Caco-2 (cell line): ENCODE measurements at regions of chr19 and their contacts with region 1.

Region 1: GRCh38 chr19:47243776-47244547 is 12.4 kb upstream of the CCDC9 start:
- DNase-seq: peak; percentile 95 to 99
- H3K4me3 ChIP-seq: peak overlapping the region; percentile 51
- H3K4me3 Mint-ChIP-seq: no peak overlapping the region
- H3K27ac Mint-ChIP-seq: no peak overlapping the region
- H3K4me1 ChIP-seq: peaks cover 14% of the 10 kb centered on the region
- H3K4me1 Mint-ChIP-seq: no peaks in the 10 kb centered on the region
- H3K27me3 ChIP-seq: no peaks in the 10 kb centered on the region
- H3K27me3 Mint-ChIP-seq: no peaks in the 10 kb centered on the region
- CTCF ChIP-seq: peak; percentile 98

Region 2: GRCh38 chr19:47013041-47013517 is 230.9 kb before region 1 on chr19:
- CTCF ChIA-PET with region 1: interaction called, 19 read pairs
- POLR2A ChIA-PET with region 1: no interaction called
- intact Hi-C with region 1: loop called (anchors 5 kb)
- DNase-seq: peak; percentile 82 to 92
- H3K4me3 ChIP-seq: 0 out of 2 replicates have a peak overlapping the region, but pooled peaks have one; percentile 7
- H3K4me3 Mint-ChIP-seq: peak overlapping the region; percentile 9
- H3K27ac Mint-ChIP-seq: peak overlapping the region; percentile 10
- H3K4me1 ChIP-seq: no peaks in the 10 kb centered on the region
- H3K4me1 Mint-ChIP-seq: peaks cover 11% of the 10 kb centered on the region
- H3K27me3 ChIP-seq: no peaks in the 10 kb centered on the region
- H3K27me3 Mint-ChIP-seq: peaks cover 3% of the 10 kb centered on the region
- CTCF ChIP-seq: peak; percentile 99

Region 3: DNA sequence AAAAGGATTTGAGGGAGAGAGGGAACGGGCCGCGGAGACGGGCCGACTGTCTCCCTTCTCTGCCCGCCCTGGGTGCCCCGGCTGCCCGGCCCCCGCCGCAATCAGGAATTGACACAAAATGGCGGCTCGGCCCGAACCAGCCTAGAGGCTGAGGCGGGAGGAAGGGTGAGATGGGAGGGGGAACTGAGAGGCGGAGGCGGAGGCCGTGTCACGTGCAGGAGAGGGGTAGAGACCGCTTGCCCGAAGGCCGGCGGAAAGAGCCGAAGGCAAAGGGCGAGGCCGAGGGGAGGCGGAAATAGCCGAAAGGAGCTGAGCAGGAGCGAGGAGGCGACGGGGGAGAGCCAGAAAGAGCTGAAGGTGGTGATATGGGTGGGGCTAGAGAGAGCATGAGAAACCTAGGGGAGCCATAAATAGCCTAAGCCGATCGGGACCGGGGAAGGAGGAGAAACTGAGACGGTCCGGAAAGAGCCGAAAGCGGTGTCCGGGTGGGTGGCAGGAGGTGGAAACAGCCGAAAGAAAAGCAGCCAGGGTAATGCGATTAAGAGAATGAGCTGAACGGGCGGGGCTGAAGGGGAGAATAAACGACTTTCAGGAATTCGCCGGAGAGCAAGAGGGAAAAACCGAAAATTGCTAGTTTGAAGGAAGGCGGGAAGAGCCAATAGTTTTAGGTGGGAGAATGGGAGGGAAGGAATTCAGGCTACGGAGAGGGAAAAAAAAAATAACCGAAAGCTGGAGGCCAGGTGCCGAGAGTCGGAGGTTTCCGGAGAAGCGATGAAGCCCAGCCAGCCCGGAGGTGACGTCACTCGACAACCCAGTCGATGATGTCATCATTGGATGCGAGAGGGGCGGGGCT is 130.7 kb before region 1 on chr19 and contains the start of gene ZC3H4:
- CTCF ChIA-PET with region 1: interaction called, 10 read pairs
- POLR2A ChIA-PET with region 1: interaction called, 21 read pairs
- intact Hi-C with region 1: no loop called
- DNase-seq: peak; percentile 100
- H3K4me3 ChIP-seq: peak within 1 kb of the TSS; percentile 64
- H3K4me3 Mint-ChIP-seq: peak within 1 kb of the TSS; percentile 97
- H3K27ac Mint-ChIP-seq: peak within 1 kb of the TSS; percentile 99
- H3K4me1 ChIP-seq: peaks cover 20% of the 10 kb centered on the region
- H3K4me1 Mint-ChIP-seq: peaks cover 28% of the 10 kb centered on the region
- H3K27me3 ChIP-seq: no peaks in the 10 kb centered on the region
- H3K27me3 Mint-ChIP-seq: no peaks in the 10 kb centered on the region
- CTCF ChIP-seq: peak in 1 of 2 experiments; percentile 11
- total RNA-seq, gene ZC3H4: 70.3 and 77.7 TPM in 2 replicates

Region 4: DNA sequence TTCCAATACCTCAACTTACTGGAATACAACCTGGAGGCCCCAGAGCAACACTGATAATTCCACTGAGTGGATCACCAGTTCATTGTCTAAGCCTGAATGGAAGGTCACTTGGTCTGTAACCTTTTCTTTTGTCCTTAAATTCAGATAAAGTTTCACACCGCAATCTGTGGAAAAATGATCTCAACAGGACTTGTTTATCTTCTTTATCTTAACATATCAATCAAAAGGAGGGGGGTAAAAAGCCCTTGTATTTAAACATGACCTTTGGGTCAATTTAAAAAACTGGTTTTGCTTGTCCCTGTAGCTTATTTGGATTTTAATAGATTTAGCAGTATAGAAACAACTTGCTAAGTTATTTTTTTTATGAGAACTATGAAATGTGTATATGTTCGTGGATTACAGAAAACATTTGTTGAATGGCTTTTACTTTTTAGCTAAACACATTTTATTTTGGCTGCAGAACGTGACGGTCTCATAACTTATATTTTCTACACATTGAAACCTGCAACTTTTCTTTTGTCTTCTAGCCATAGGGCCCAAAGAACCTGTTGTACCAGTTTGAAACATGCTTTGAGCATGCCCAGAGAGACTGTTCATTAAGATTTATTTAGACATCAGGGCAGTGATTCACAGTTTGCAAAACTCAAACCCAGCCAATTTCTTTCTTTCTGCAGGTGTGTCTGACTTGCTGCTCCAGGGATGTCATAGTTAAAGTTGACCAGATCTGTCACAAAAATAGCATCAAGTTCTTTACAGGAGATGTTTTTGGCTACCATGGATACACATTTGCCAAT is 91.5 kb before region 1 on chr19:
- CTCF ChIA-PET with region 1: interaction called, 14 read pairs
- POLR2A ChIA-PET with region 1: interaction called, 3 read pairs
- intact Hi-C with region 1: loop called (anchors 1 kb)
- DNase-seq: peak in 1 of 2 experiments; percentile 55
- H3K4me3 ChIP-seq: no peak overlapping the region
- H3K4me3 Mint-ChIP-seq: peak overlapping the region; percentile 3
- H3K27ac Mint-ChIP-seq: peak overlapping the region; percentile 31
- H3K4me1 ChIP-seq: peaks cover 33% of the 10 kb centered on the region
- H3K4me1 Mint-ChIP-seq: peaks cover 36% of the 10 kb centered on the region
- H3K27me3 ChIP-seq: no peaks in the 10 kb centered on the region
- H3K27me3 Mint-ChIP-seq: no peaks in the 10 kb centered on the region
- CTCF ChIP-seq: no peak

Region 5: DNA sequence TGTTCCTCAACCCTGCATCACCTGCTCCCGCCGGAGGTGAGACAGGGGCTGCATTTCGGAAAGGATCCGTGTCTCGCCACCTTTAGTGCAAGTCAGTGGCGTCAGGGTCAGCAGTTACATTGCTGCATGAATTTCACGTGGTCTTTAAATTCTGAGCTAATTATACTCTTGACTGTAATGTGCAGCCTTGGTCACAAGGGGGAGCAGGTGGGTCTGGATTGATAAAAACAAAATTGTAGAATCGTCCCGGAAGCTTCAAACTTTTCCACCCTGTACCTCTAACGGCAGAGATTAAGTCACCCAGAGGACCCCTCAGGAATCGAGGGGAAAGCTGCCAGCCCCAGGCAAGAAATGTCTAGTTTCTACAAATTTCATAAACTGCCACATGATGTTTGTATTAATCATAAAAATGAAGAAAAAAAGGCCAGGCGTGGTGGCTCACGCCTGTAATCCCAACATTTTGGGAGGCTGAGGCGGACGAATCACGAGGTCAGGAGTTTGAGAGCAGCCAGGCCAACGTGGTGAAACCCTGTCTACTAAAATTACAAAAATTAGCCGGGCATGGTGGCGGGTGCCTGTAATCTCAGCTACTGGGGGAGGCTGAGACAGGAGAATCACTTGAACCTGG is 33.2 kb before region 1 on chr19:
- CTCF ChIA-PET with region 1: interaction called, 234 read pairs
- POLR2A ChIA-PET with region 1: interaction called, 43 read pairs
- intact Hi-C with region 1: loop called (anchors 1 kb)
- DNase-seq: peak; percentile 74 to 85
- H3K4me3 ChIP-seq: no peak overlapping the region
- H3K4me3 Mint-ChIP-seq: peak overlapping the region; percentile 42
- H3K27ac Mint-ChIP-seq: peak overlapping the region; percentile 94
- H3K4me1 ChIP-seq: no peaks in the 10 kb centered on the region
- H3K4me1 Mint-ChIP-seq: peaks cover 13% of the 10 kb centered on the region
- H3K27me3 ChIP-seq: no peaks in the 10 kb centered on the region
- H3K27me3 Mint-ChIP-seq: no peaks in the 10 kb centered on the region
- CTCF ChIP-seq: peak; percentile 83 to 85

Region 6: DNA sequence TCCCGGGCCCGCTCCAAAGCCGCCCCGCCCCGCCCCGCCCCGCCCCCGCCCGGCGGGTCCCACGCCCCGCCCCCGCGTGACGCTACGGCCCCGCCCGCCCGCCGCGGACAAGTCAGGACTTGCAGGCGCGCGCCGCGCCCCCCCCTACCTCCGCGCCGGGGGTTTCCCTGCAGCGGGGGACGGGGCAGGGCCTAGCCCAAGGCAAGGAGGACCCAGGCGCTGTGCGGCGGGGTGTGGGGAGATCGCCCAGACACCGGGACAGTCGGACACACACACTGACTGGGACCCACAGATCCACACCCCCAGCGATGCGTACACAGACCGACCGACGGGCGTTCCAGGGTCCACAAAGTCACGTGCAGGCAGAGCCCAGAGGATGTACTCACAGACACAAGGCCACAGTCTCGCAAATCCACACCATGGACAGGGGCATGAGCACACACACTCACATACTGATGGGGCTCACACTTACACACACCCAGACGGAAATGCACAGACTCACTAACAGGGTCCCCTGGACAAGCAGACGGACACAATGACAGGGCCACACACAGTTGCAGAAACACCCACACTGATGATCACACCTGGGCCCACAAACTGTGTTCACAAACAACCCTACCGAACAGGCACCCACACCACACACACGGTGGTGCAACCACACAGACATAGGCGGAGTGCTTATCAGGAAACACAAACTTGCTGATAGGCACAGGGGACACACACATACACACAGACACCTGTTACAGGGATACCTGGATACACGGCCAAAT is 12.6 kb before region 1 on chr19:
- CTCF ChIA-PET with region 1: interaction called, 64 read pairs
- POLR2A ChIA-PET with region 1: interaction called, 55 read pairs
- intact Hi-C with region 1: loop called (anchors 1 kb)
- DNase-seq: peak; percentile 91 to 92
- H3K4me3 ChIP-seq: peak overlapping the region; percentile 96
- H3K4me3 Mint-ChIP-seq: peak overlapping the region; percentile 73
- H3K27ac Mint-ChIP-seq: peak overlapping the region; percentile 77
- H3K4me1 ChIP-seq: peaks cover 35% of the 10 kb centered on the region
- H3K4me1 Mint-ChIP-seq: peaks cover 24% of the 10 kb centered on the region
- H3K27me3 ChIP-seq: no peaks in the 10 kb centered on the region
- H3K27me3 Mint-ChIP-seq: no peaks in the 10 kb centered on the region
- CTCF ChIP-seq: no peak

Region 7: DNA sequence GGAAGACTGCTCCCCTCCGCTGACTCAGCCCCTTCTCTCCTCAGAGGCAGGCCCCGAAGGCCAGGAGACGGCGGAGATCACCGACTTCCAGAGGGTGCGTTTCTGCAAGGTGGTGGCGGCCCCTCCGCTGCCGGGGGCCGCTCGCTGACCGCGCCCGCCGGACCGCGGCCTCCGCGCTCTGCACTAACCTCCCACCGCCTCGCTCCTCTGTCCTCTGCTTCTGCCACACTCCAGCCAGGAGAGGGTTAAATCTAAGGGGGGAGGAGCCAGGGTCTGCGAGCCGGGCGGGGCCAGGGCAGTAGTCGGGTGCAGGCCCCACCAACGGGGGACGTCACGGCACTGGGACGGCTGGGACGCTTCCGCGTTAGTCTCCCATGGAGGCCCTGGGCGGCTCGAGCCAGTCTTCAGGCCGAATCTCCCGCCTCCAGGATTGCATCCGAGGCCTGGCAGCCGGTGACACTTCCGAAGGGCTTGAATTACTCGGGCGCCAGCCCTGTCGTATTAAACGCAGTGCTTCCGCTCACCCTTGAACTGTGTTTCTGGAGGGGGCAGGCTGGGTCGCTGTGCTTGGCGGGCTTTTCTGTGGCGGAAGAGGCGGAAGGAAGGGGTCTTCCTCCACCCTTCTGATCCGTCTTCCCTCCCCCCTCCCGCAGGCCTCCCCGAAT is 29.5 kb after region 1 on chr19:
- CTCF ChIA-PET with region 1: interaction called, 22 read pairs
- POLR2A ChIA-PET with region 1: interaction called, 8 read pairs
- intact Hi-C with region 1: no loop called
- DNase-seq: peak; percentile 98
- H3K4me3 ChIP-seq: peak overlapping the region; percentile 77
- H3K4me3 Mint-ChIP-seq: peak overlapping the region; percentile 93
- H3K27ac Mint-ChIP-seq: peak overlapping the region; percentile 94
- H3K4me1 ChIP-seq: peaks cover 9% of the 10 kb centered on the region; the same call in 1 of the 2 replicates
- H3K4me1 Mint-ChIP-seq: peaks cover 20% of the 10 kb centered on the region
- H3K27me3 ChIP-seq: no peaks in the 10 kb centered on the region
- H3K27me3 Mint-ChIP-seq: no peaks in the 10 kb centered on the region
- CTCF ChIP-seq: no peak

Region 8: GRCh38 chr19:47310819-47311218 is 66.9 kb after region 1 on chr19:
- CTCF ChIA-PET with region 1: no interaction called
- POLR2A ChIA-PET with region 1: no interaction called
- intact Hi-C with region 1: no loop called
- DNase-seq: peak in 1 of 2 experiments; percentile 42
- H3K4me3 ChIP-seq: no peak overlapping the region
- H3K4me3 Mint-ChIP-seq: no peak overlapping the region
- H3K27ac Mint-ChIP-seq: no peak overlapping the region
- H3K4me1 ChIP-seq: peaks cover 6% of the 10 kb centered on the region; the same call in 1 of the 2 replicates
- H3K4me1 Mint-ChIP-seq: peaks cover 15% of the 10 kb centered on the region
- H3K27me3 ChIP-seq: no peaks in the 10 kb centered on the region
- H3K27me3 Mint-ChIP-seq: no peaks in the 10 kb centered on the region
- CTCF ChIP-seq: no peak

Region 9: GRCh38 chr19:47324502-47324901 is 80.5 kb after region 1 on chr19:
- CTCF ChIA-PET with region 1: no interaction called
- POLR2A ChIA-PET with region 1: no interaction called
- intact Hi-C with region 1: no loop called
- DNase-seq: no peak
- H3K4me3 ChIP-seq: no peak overlapping the region
- H3K4me3 Mint-ChIP-seq: no peak overlapping the region
- H3K27ac Mint-ChIP-seq: no peak overlapping the region
- H3K4me1 ChIP-seq: no peaks in the 10 kb centered on the region
- H3K4me1 Mint-ChIP-seq: no peaks in the 10 kb centered on the region
- H3K27me3 ChIP-seq: no peaks in the 10 kb centered on the region
- H3K27me3 Mint-ChIP-seq: peaks cover 3% of the 10 kb centered on the region
- CTCF ChIP-seq: no peak